Ascending aorta (tissue), 2 donors: ENCODE measurements at regions of chr12 and their contacts with region 1.

Region 1: DNA sequence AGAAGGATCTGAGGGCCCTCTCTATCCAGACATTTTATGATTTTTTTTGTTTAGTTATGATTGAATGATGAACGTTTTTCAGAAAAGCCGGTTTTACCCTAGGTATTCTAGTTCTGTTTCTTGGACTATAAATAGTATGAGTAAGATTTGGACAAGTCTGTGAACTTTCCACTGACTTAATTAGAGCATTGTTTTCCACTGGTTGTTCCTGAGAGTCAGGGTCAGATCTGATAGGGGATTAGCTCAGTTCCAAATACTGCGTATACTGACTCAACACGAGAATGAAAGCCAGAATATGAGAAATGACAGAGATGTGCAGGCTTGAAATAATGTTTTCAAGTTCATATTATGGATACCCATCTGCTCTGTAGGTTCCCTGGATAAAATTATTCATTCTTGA is 361.6 kb downstream of the AEBP2 start:
- DNase-seq: no peak
- H3K4me3 ChIP-seq: no peak overlapping the region
- H3K27ac ChIP-seq: peak overlapping the region; percentile 66 to 82
- H3K4me1 ChIP-seq: peaks cover 0 to 12% of the 10 kb centered on the region in 2 donors
- H3K27me3 ChIP-seq: no peaks in the 10 kb centered on the region
- CTCF ChIP-seq: no peak

Region 2: DNA sequence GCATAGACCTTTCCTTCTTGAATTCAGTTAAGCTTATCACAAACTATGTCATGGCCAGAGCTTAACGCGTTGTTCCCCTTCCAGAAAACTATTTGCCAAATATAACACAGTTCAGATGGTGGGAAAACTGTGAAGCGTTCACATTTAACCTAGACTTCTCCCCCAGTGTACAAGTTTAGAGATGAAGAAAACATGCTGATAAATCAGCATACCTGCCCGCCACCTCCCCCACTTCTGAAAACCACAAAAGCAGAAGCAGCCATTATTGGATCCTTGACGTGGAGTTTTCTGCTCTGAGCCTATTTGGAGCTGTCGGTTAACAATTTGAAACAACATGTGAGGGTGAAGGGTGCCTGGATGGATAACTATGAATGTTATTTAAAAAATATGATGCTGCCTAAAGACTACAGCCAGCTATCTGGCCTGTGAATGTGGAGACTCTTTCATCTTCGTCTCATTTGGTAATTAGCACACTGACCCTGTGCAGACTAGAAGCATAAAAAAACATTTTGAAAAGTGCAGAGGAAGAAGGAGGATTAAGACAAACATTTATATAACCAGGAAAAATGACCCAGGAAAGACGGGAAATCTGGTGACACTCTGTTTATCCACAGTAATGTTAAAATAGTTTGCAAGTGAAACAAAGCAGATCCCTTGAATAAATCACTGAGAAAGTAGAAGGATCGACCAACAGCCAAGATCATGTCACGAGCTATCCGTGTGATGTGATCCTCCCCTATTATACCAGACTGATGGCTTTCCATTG is 46.6 kb after region 1 on chr12:
- intact Hi-C with region 1: loop called (anchors 5 kb)
- DNase-seq: no peak
- H3K4me3 ChIP-seq: peak overlapping the region; percentile 10 to 53
- H3K27ac ChIP-seq: peak overlapping the region; percentile 83 to 90
- H3K4me1 ChIP-seq: peaks cover 0 to 24% of the 10 kb centered on the region in 2 donors
- H3K27me3 ChIP-seq: no peaks in the 10 kb centered on the region
- CTCF ChIP-seq: no peak